Activated T-helper 1 cell treated with anti-CD3 and anti-CD28 coated beads, Interleukin-12 subunit alpha, Interleukin-12 subunit beta, Interleukin-2, Interleukin-4 antibody, amounts not matched to agents 30 ng/mL and 10 ng/mL and 1 ng/mL, durations not matched to agents 14 hours and 24 hours and 36 hours (primary cell): ENCODE measurements at regions of chr14 and their contacts with region 1.

Region 1: DNA sequence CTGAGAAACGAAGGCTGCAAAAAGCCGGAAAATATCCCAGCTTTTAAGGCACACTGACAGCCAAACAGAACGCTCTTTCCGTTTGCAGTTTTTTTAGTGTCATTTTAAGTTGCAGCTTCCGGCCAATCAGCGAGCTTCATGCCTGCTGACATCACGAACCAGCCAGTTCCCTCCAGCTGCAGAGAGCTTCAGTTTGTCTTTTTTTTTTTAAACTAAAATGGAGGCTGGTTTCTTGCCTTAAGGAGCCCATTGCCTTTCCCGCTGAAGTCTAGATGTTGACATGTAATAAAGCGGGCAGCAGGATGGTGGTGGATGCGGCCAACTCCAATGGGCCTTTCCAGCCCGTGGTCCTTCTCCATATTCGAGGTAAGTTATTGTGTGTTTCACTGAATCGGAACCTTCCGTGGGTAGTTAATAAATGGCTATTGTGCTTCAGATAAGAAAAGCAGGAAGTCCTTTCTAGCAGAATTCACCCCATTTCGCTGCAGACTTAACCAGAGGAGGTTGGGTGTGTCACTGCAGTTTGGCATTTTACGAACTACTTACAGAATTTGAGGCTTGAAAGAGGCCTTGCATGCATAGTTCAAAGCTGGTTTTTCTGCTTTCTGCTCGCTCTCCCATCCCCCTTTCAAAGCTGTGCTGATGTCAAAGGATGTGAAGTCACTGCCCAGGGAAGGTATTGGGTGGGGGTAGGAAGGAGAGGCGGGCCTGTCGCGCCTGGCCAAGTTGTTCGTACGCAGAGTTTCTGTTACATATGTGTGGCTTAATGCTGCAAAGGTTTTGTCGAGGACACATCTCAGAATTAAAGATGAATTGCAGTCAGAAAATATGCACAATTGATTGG is 48.4 kb downstream of the PPP2R5C start:
- DNase-seq: peak; percentile 88
- H3K4me3 Mint-ChIP-seq: peak overlapping the region; percentile 96
- H3K27ac Mint-ChIP-seq: peak overlapping the region; percentile 100
- H3K4me1 Mint-ChIP-seq: peaks cover 52% of the 10 kb centered on the region
- H3K27me3 Mint-ChIP-seq: no peaks in the 10 kb centered on the region

Region 2: GRCh38 chr14:101761032-101761880 is 48.6 kb before region 1 on chr14 and contains the start of gene PPP2R5C:
- intact Hi-C with region 1: loop called (anchors 1 kb)
- DNase-seq: peak; percentile 72
- H3K4me3 Mint-ChIP-seq: peak within 1 kb of the TSS; percentile 90
- H3K27ac Mint-ChIP-seq: peak within 1 kb of the TSS; percentile 79
- H3K4me1 Mint-ChIP-seq: peaks cover 33% of the 10 kb centered on the region
- H3K27me3 Mint-ChIP-seq: peaks cover 3% of the 10 kb centered on the region
- total RNA-seq, gene PPP2R5C: 157 and 166 TPM in 2 replicates

Region 3: GRCh38 chr14:101781240-101782061 is 28.4 kb before region 1 on chr14:
- intact Hi-C with region 1: loop called (anchors 2 kb)
- DNase-seq: peak; percentile 12
- H3K4me3 Mint-ChIP-seq: peak overlapping the region; percentile 65
- H3K27ac Mint-ChIP-seq: no peak overlapping the region
- H3K4me1 Mint-ChIP-seq: peaks cover 4% of the 10 kb centered on the region
- H3K27me3 Mint-ChIP-seq: peaks cover 11% of the 10 kb centered on the region

Region 4: GRCh38 chr14:101791919-101792572 is 17.8 kb before region 1 on chr14:
- intact Hi-C with region 1: loop called (anchors 1 kb)
- DNase-seq: no peak
- H3K4me3 Mint-ChIP-seq: peak overlapping the region; percentile 52
- H3K27ac Mint-ChIP-seq: peak overlapping the region; percentile 71
- H3K4me1 Mint-ChIP-seq: peaks cover 20% of the 10 kb centered on the region
- H3K27me3 Mint-ChIP-seq: no peaks in the 10 kb centered on the region

Region 5: GRCh38 chr14:102524466-102525218 is 714.7 kb after region 1 on chr14:
- intact Hi-C with region 1: loop called (anchors 10 kb)
- DNase-seq: peak; percentile 94
- H3K4me3 Mint-ChIP-seq: peak overlapping the region; percentile 92
- H3K27ac Mint-ChIP-seq: peak overlapping the region; percentile 88
- H3K4me1 Mint-ChIP-seq: peaks cover 27% of the 10 kb centered on the region
- H3K27me3 Mint-ChIP-seq: peaks cover 7% of the 10 kb centered on the region